ENCODE measurements at regions of chr9 and their contacts with region 1.

Region 1: GRCh38 chr9:33623658-33624586 is 99.9 kb downstream of the ANKRD18B start:
- DNase-seq: peak; percentile 71 to 84
- H3K4me3 ChIP-seq: no peak overlapping the region
- H3K4me3 Mint-ChIP-seq: no peak overlapping the region
- H3K27ac Mint-ChIP-seq: no peak overlapping the region
- H3K4me1 ChIP-seq: no peaks in the 10 kb centered on the region
- H3K4me1 Mint-ChIP-seq: peaks cover 13% of the 10 kb centered on the region
- H3K27me3 ChIP-seq: no peaks in the 10 kb centered on the region; the same call in 1 of the 2 replicates
- H3K27me3 Mint-ChIP-seq: peaks cover 8% of the 10 kb centered on the region
- CTCF ChIP-seq: peak; percentile 82 to 89

Region 2: GRCh38 chr9:33721674-33722358 is 97.9 kb after region 1 on chr9:
- CTCF ChIA-PET with region 1: interaction called, 137 read pairs
- POLR2A ChIA-PET with region 1: no interaction called
- intact Hi-C with region 1: loop called (anchors 1 kb)
- DNase-seq: peak; percentile 82 to 90
- H3K4me3 ChIP-seq: no peak overlapping the region
- H3K4me3 Mint-ChIP-seq: no peak overlapping the region
- H3K27ac Mint-ChIP-seq: no peak overlapping the region
- H3K4me1 ChIP-seq: no peaks in the 10 kb centered on the region
- H3K4me1 Mint-ChIP-seq: no peaks in the 10 kb centered on the region
- H3K27me3 ChIP-seq: no peaks in the 10 kb centered on the region
- H3K27me3 Mint-ChIP-seq: peaks cover 11% of the 10 kb centered on the region
- CTCF ChIP-seq: peak; percentile 100

Region 3: GRCh38 chr9:33778700-33779351 is 154.9 kb after region 1 on chr9:
- CTCF ChIA-PET with region 1: interaction called, 12 read pairs
- POLR2A ChIA-PET with region 1: no interaction called
- intact Hi-C with region 1: loop called (anchors 5 kb)
- DNase-seq: peak; percentile 63 to 73
- H3K4me3 ChIP-seq: no peak overlapping the region
- H3K4me3 Mint-ChIP-seq: no peak overlapping the region
- H3K27ac Mint-ChIP-seq: no peak overlapping the region
- H3K4me1 ChIP-seq: no peaks in the 10 kb centered on the region
- H3K4me1 Mint-ChIP-seq: peaks cover 7% of the 10 kb centered on the region
- H3K27me3 ChIP-seq: no peaks in the 10 kb centered on the region
- H3K27me3 Mint-ChIP-seq: no peaks in the 10 kb centered on the region
- CTCF ChIP-seq: peak; percentile 85 to 86

Measured in Caco-2 (cell line).